ENCODE measurements at regions of chr9 and their contacts with region 1.

Region 1: DNA sequence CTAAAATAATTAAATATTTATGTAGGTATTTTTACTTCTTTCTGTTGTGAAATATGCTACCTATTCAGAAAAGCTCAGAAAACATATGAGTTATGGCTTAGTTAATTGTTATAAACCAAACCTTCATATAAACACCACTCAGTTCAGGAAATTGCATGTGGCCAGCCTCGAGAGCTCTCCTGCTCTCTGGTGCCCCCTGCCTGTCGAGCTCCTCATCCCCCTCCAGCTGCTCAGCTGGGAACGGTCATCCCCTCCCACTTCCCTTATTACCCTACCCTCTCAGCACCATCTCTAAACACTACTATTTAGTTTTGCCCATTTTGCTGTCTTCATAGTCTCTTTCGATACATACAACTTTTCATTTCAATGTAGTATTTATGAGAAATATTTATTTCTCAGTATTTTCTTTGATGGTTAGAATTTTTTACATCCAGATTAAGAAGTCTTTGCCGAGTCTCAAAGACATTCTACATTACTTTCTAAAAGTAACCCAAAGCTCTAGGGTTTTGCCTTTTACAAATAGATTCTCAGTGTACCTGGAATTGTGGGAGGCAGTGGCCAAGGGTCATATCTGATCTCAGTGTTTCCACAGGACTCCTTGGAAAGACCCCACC is 51.2 kb upstream of the SEMA4D start:
- DNase-seq: peak; percentile 75
- H3K4me3 ChIP-seq: no peak overlapping the region
- H3K27ac ChIP-seq: no peak overlapping the region
- H3K4me1 ChIP-seq: no peaks in the 10 kb centered on the region
- H3K27me3 ChIP-seq: no peaks in the 10 kb centered on the region
- CTCF ChIP-seq: peak; percentile 96

Region 2: GRCh38 chr9:89323390-89323789 is 225.7 kb before region 1 on chr9:
- intact Hi-C with region 1: loop called (anchors 5 kb)
- DNase-seq: no peak
- H3K4me3 ChIP-seq: no peak overlapping the region
- H3K27ac ChIP-seq: no peak overlapping the region
- H3K4me1 ChIP-seq: peaks cover 64% of the 10 kb centered on the region
- H3K27me3 ChIP-seq: no peaks in the 10 kb centered on the region
- CTCF ChIP-seq: no peak

Region 3: DNA sequence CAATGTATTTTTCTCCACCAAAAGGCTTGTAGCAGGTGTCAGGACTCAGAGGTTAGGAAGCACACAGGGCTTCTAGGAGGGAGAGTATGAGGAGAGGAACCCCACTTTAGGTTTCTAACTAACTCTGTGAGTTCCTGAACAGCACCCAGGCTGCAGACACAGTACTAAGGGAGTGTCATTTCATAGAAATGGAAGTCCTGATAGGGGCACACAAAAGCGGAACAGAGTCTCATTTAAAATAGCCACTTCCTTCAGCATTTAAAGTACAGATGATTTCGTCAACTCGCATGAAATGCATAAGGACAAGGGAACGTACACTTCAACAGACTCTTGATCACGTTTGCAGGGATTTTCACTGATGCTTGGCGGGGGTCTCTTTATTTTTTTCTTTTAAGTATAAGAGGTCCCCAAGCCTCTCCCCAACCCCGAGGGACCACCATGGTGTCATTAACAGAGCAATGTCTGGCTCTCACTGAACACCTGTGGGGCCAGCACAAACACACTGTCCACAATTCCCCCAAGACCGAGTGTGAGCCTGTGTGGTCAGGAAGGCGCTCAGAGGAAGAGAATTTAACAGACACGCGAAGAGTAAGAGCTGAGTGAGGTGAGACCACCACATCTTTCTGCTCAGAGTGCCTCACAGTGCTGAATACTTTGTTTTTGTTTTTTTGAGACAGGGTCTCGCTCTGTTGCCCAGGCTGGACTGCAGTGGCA is 148.6 kb before region 1 on chr9:
- intact Hi-C with region 1: no loop called
- DNase-seq: no peak
- H3K4me3 ChIP-seq: no peak overlapping the region
- H3K27ac ChIP-seq: no peak overlapping the region
- H3K4me1 ChIP-seq: no peaks in the 10 kb centered on the region
- H3K27me3 ChIP-seq: no peaks in the 10 kb centered on the region
- CTCF ChIP-seq: no peak